HEK293 (cell line): ENCODE measurements at regions of chr19 and their contacts with region 1.

Region 1: DNA sequence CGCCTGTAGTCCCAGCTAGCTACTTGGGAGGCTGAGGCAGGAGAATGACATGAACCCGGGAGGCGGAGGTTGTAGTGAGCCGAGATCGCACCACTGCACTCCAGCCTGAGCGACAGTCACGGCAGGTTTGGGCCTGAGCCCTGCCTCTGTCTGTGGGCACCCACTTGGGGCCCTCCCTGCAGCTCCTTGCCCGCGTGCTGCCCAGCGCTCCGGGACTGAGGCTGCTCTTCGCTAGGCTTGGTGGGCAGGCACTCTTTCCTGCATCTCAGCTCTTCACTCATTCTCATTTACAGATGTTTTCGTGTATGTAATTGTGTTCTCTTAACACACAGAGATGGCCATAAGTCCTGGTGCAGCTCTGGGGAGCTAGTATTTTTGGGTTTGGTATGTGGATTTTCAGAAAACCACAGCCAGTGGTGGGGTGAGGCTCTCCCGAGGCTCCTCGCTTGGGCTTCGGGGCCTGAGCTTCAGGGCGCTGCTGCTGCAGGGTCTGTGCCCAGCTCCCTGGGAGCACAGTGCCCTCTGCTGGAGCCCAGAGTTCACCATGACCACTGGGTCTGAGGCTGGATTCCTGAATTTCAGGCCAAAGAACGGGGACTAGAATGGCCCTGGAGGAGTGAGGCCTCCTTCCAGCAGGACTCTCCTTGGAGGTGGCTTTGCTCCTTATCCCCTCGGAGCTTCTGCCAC is 15.2 kb downstream of the UPF1 start:
- H3K4me3 ChIP-seq: no peak overlapping the region
- H3K27ac ChIP-seq: no peak overlapping the region
- H3K4me1 ChIP-seq: peaks cover 6% of the 10 kb centered on the region; the same call in 1 of the 2 replicates
- CTCF ChIP-seq: peak; percentile 71

Region 2: DNA sequence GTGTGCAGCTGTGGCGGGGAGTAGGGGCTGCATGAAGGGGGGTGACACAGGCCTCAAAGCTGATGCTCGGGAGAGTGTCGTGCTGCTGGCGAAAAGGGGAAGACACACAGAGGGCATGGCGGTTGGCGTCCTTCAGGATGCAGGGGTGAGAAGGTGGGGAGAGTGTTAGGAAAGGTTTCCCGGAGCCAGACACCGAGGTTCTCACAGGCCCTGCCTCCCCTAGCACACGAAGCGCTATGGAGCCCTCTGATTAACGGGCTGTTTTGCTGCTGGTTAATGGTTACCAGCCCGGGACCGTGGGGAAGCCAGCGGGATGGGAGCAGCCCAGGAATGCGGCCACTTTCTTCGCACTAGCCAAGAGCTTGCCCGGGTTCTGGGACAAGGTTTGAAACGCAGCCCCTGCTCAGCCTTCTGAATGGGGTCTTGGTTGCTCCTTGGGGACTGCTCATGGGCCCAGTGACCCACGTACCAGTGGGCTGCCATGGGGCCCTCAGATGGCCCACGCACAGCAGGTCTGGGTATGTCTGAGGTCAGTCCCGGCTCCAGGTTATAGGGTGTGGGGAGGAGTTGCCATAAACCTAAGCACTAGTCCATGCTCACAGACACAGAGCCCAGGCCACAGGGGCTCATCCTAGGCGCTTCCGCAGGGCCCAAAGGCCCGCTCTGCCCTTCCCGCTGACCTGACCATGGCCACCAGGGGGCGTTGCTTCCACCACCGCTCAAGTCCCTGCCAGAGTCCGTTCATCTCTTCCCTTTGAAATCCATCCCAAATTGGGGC is 377.7 kb before region 1 on chr19:
- CTCF ChIA-PET with region 1: interaction called, 11 read pairs
- POLR2A ChIA-PET with region 1: no interaction called
- H3K4me3 ChIP-seq: no peak overlapping the region
- H3K27ac ChIP-seq: no peak overlapping the region
- H3K4me1 ChIP-seq: peaks cover 4% of the 10 kb centered on the region; the same call in 1 of the 2 replicates
- CTCF ChIP-seq: peak; percentile 86

Region 3: GRCh38 chr19:18675779-18676178 is 171.2 kb before region 1 on chr19:
- CTCF ChIA-PET with region 1: interaction called, 10 read pairs
- POLR2A ChIA-PET with region 1: no interaction called
- H3K4me3 ChIP-seq: no peak overlapping the region
- H3K27ac ChIP-seq: no peak overlapping the region
- H3K4me1 ChIP-seq: no peaks in the 10 kb centered on the region
- CTCF ChIP-seq: no peak; the same call in 1 of the 2 replicates

Region 4: DNA sequence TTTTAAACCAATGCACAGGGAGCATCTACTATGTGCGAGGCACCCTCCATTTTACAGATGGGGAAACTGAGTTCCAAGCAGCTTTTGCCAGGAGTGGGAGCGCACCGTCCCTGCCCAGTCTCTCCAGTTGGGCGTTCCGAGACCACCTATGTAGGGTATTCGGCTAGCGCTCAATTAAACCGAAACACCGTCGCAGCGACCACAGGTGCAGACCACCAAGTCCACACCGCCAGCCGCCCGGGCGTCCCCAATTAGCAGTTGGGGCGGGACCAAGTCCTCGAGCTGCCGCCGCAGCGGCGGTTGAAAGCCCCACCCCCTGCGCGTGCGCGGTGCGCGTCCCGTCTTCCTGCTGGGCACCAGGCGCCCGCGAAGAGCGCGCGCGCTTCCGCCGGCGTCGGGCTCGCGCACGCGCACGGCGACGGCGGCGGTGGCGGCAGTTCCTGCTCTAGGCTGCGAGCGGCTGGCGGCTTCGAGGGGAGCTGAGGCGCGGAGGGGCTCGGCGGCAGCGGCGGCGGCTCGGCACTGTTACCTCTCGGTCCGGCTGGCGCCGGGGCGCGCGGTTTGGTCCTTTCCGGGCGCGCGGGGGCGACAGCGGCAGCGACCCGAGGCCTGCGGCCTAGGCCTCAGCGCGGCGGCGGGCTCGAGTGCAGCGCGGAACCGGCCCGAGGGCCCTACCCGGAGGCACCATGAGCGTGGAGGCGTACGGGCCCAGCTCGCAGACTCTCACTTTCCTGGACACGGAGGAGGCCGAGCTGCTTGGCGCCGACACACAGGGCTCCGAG is 15.3 kb before region 1 on chr19 and contains the start of gene UPF1:
- CTCF ChIA-PET with region 1: interaction called, 69 read pairs
- POLR2A ChIA-PET with region 1: interaction called, 23 read pairs
- H3K4me3 ChIP-seq: peak within 1 kb of the TSS; percentile 87
- H3K27ac ChIP-seq: peak within 1 kb of the TSS; percentile 93
- H3K4me1 ChIP-seq: no peaks in the 10 kb centered on the region
- CTCF ChIP-seq: no peak

Region 5: GRCh38 chr19:18865973-18866799 is 19.2 kb after region 1 on chr19:
- CTCF ChIA-PET with region 1: interaction called, 18 read pairs
- POLR2A ChIA-PET with region 1: interaction called, 3 read pairs
- H3K4me3 ChIP-seq: no peak overlapping the region
- H3K27ac ChIP-seq: no peak overlapping the region; the same call in 1 of the 2 replicates
- H3K4me1 ChIP-seq: peaks cover 2% of the 10 kb centered on the region; the same call in 1 of the 2 replicates
- CTCF ChIP-seq: peak; percentile 59

Region 6: DNA sequence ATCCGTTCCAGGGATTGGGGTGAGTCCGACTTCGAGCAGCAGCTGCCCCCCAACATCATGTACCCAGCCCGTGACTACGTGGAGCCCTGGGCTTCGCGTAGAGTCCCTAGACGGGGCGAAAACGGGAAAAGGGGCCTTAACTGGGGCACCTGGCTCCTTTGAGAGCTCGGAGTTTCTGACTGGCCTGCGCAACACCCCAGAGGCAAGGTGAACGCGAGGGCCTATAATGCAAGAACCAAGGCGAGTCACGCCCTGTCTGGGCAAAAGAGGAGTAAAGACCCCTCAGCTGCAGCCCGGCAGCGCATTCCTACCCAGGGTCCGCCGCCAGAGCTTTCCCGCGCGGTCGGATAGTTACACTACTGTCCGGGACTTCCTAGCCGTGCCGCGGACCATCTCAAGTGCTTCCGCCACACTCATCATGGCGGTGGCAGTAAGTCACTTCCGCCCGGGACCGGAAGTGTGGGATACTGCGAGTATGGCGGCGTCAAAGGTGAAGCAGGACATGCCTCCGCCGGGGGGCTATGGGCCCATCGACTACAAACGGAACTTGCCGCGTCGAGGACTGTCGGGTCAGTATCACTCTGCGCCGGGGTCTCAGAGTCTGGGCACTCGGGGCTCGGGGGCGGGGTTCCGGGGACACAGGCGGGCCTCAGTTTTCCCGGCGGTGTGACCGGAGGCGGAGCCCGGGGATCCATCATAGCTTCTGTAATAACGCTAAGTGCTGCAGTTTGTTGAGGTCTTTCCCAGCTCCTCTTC is 668.9 kb after region 1 on chr19 and contains the start of gene NDUFA13:
- CTCF ChIA-PET with region 1: no interaction called
- POLR2A ChIA-PET with region 1: no interaction called
- H3K4me3 ChIP-seq: peak within 1 kb of the TSS; percentile 83
- H3K27ac ChIP-seq: peak within 1 kb of the TSS; percentile 33; the same call in 1 of the 2 replicates
- H3K4me1 ChIP-seq: no peaks in the 10 kb centered on the region
- CTCF ChIP-seq: no peak